ENCODE measurements at regions of chr11 and their contacts with region 1.

Region 1: GRCh38 chr11:76728778-76729177 is 54.4 kb upstream of the TSKU start:
- DNase-seq: no peak
- H3K4me3 ChIP-seq: no peak overlapping the region
- H3K27ac ChIP-seq: no peak overlapping the region
- H3K4me1 ChIP-seq: no peaks in the 10 kb centered on the region
- H3K27me3 ChIP-seq: no peaks in the 10 kb centered on the region
- CTCF ChIP-seq: no peak
- POLR2A ChIP-seq: no peak

Region 2: GRCh38 chr11:75474878-75475766 is 1253.7 kb before region 1 on chr11:
- intact Hi-C with region 1: loop called (anchors 5 kb)
- DNase-seq: peak in 1 of 2 donors; percentile 39
- H3K4me3 ChIP-seq: peak overlapping the region in 1 of 3 donors; percentile 38
- H3K27ac ChIP-seq: peak overlapping the region; percentile 83 to 94
- H3K4me1 ChIP-seq: peaks cover 3% of the 10 kb centered on the region in 2 donors
- H3K27me3 ChIP-seq: no peaks in the 10 kb centered on the region
- CTCF ChIP-seq: no peak
- POLR2A ChIP-seq: no peak

Region 3: GRCh38 chr11:76680518-76681425 is 48.0 kb before region 1 on chr11:
- intact Hi-C with region 1: no loop called
- DNase-seq: no peak
- H3K4me3 ChIP-seq: peak overlapping the region in 1 of 3 donors; percentile 37
- H3K27ac ChIP-seq: no peak overlapping the region
- H3K4me1 ChIP-seq: no peaks in the 10 kb centered on the region
- H3K27me3 ChIP-seq: no peaks in the 10 kb centered on the region
- CTCF ChIP-seq: peak; percentile 15 to 74 (median 46)
- POLR2A ChIP-seq: no peak

Measured in breast epithelium (tissue), 4 donors.